ENCODE measurements at regions of chrX and their contacts with region 1.

Region 1: DNA sequence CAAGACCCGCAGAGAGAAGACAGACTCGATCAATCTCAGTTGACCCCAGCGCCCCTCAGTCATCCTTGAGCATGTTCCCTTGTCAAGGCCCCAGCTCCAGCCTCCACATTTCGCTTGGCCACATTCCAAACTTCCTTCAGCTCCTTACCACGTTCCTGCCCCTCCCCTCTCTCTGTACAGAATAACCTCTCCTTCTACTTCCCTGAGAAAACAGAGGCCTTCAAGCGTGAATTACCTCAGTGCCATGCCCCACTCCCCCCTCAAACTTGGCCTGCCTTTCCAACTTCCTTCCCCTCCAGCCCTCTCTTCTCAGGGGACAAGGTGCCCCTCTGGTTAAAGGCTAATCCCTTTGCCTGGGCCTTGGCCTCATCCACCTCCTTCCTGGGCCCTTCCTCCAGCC is 3.2 kb upstream of the RIPPLY1 start:
- DNase-seq: peak in 4 of 5 donors; percentile 62 to 87 (median 72)
- H3K4me3 ChIP-seq: no peak overlapping the region
- H3K27ac ChIP-seq: peak overlapping the region; percentile 47 to 51
- H3K4me1 ChIP-seq: peaks cover 0 to 8% (median 4%) of the 10 kb centered on the region in 3 donors
- H3K27me3 ChIP-seq: no peaks in the 10 kb centered on the region
- CTCF ChIP-seq: no peak

Region 2: DNA sequence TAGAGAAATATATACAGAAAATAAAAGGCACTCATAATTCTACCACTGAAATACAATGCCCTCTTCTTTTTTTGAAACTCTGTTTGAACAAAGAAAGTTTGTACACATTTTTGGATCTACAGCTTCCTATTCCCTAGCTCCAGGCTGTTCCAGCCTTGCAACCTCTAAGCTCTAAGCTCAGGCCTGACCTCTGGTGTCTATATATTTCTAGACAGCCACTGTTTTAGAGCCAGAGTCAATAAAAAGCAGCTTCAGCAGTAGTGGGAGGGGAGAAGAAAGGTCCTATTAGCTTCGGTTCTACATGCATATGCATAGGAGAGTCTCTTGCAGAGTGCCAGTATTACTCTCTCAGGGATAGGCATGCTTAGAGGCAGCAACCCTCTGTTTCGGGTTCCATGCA is 53.5 kb after region 1 on chrX:
- intact Hi-C with region 1: loop called (anchors 5 kb)
- DNase-seq: peak in 3 of 5 donors; percentile 11 to 53 (median 35)
- H3K4me3 ChIP-seq: no peak overlapping the region
- H3K27ac ChIP-seq: no peak overlapping the region
- H3K4me1 ChIP-seq: no peaks in the 10 kb centered on the region
- H3K27me3 ChIP-seq: peaks cover 3% of the 10 kb centered on the region
- CTCF ChIP-seq: no peak